ENCODE measurements at regions of chr19 and their contacts with region 1.

Region 1: DNA sequence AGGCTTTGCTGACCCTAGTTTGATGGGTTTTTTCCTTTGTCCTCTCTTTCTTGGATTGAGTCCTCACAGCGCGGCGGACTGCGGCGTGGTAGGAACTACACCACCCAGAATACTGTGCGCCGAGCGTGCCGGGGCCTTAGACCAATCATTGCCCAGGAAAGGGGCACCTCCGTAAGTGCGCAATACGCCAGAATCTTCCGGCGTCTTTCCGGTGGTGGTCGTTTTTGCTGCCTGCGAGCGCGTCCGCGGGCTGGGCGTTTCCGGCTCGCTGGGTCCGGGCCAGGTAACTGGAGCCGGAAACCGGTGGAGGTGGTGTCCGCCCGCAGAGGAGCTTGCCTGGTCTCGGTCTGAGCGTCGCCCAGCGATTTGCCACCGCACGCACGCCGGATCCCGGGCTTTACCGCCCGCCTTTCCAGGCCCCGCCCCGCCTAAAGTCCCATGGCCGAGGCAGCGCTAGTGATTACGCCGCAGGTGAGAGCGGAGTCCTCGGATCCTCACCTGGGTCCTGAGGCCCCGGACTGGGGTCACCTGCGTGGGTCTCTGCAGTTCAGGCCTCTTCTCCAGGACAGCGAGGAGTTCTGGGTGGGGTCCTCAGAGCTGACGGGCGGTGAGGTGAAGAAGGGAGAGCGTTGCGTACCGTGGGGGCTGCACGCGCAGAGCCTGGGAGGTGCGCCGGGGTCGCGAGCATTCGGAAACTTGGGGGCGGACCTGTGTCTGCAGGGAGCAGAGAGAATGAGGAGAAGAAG is at the start of gene ZNF549:
- DNase-seq: peak; percentile 88 to 93 (median 90)
- H3K4me3 ChIP-seq: peak within 1 kb of the TSS; percentile 15 to 99
- H3K4me3 Mint-ChIP-seq: peak within 1 kb of the TSS; percentile 86 to 98 (median 92)
- H3K27ac ChIP-seq: peak within 1 kb of the TSS; percentile 79
- H3K27ac Mint-ChIP-seq: peak within 1 kb of the TSS; percentile 86 to 97 (median 92)
- H3K4me1 ChIP-seq: peaks cover 16% of the 10 kb centered on the region
- H3K4me1 Mint-ChIP-seq: peaks cover 16 to 31% (median 22%) of the 10 kb centered on the region in 4 donors
- H3K27me3 ChIP-seq: no peaks in the 10 kb centered on the region
- H3K27me3 Mint-ChIP-seq: peaks cover 0 to 4% of the 10 kb centered on the region in 2 donors
- total RNA-seq, gene ZNF549: 20.5 to 21.8 TPM

Region 2: GRCh38 chr19:57320180-57321084 is 206.9 kb before region 1 on chr19 and contains the start of gene ZNF543:
- CTCF ChIA-PET with region 1: no interaction called
- POLR2A ChIA-PET with region 1: no interaction called
- intact Hi-C with region 1: loop called (anchors 1 kb)
- DNase-seq: peak; percentile 86 to 91 (median 89)
- H3K4me3 ChIP-seq: peak within 1 kb of the TSS; percentile 81 to 90
- H3K4me3 Mint-ChIP-seq: peak within 1 kb of the TSS; percentile 90 to 97 (median 94)
- H3K27ac ChIP-seq: peak within 1 kb of the TSS; percentile 84
- H3K27ac Mint-ChIP-seq: peak within 1 kb of the TSS; percentile 90 to 99 (median 97)
- H3K4me1 ChIP-seq: peaks cover 29% of the 10 kb centered on the region
- H3K4me1 Mint-ChIP-seq: peaks cover 18 to 34% (median 27%) of the 10 kb centered on the region in 4 donors
- H3K27me3 ChIP-seq: peaks cover 8% of the 10 kb centered on the region
- H3K27me3 Mint-ChIP-seq: peaks cover 14 to 19% of the 10 kb centered on the region in 2 donors
- total RNA-seq, gene ZNF543: 9.4 to 10.7 TPM

Region 3: DNA sequence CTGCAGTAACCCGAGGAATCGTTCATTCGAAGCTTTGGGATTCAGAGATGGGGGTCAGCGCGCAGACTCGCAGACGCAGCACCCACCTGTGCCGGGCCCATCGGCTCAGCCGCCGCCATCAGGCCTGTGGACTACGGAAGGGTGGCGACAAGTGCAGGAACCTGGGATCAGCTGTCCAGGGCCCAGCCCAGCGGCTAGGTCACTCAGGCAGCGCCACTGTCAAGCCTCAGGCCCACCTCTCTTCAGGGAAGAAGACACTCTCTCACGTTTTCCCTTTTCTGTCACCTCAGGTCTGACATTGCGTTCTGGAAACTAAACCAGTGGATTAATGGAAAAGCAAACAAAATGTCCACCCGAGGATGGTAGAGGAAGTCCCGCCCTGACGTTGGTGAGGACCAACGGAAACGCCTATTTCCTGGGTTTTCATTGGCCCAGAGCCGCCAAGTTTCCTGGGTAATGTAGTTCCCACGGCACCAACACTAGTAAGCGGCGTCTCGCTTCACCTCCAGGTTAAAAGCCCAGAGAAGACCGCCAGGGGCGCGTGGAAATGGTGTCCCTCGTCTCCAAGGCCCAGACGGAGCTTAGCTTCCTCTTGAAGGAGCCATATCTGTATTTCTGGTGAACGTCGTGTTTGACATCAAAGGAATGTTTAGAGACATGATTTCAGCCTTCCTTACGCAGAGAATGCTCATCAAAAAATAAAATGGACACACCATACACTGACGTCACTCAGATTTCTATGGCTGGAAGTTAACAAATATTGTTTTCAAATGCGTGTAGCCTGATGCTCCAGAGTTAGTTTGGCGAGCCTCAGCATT is 49.9 kb before region 1 on chr19 and contains the start of gene ZNF772:
- CTCF ChIA-PET with region 1: no interaction called
- POLR2A ChIA-PET with region 1: interaction called, 4 read pairs
- intact Hi-C with region 1: loop called (anchors 1 kb)
- DNase-seq: peak; percentile 86 to 96 (median 89)
- H3K4me3 ChIP-seq: peak within 1 kb of the TSS; percentile 36 to 89
- H3K4me3 Mint-ChIP-seq: peak within 1 kb of the TSS; percentile 86 to 98 (median 92)
- H3K27ac ChIP-seq: peak within 1 kb of the TSS; percentile 61
- H3K27ac Mint-ChIP-seq: peak within 1 kb of the TSS; percentile 26 to 95 (median 90)
- H3K4me1 ChIP-seq: peaks cover 8% of the 10 kb centered on the region
- H3K4me1 Mint-ChIP-seq: peaks cover 4 to 19% (median 14%) of the 10 kb centered on the region in 4 donors
- H3K27me3 ChIP-seq: no peaks in the 10 kb centered on the region
- H3K27me3 Mint-ChIP-seq: peaks cover 0 to 2% of the 10 kb centered on the region in 2 donors
- total RNA-seq, gene ZNF772: 12.8 to 17.4 TPM

Region 4: DNA sequence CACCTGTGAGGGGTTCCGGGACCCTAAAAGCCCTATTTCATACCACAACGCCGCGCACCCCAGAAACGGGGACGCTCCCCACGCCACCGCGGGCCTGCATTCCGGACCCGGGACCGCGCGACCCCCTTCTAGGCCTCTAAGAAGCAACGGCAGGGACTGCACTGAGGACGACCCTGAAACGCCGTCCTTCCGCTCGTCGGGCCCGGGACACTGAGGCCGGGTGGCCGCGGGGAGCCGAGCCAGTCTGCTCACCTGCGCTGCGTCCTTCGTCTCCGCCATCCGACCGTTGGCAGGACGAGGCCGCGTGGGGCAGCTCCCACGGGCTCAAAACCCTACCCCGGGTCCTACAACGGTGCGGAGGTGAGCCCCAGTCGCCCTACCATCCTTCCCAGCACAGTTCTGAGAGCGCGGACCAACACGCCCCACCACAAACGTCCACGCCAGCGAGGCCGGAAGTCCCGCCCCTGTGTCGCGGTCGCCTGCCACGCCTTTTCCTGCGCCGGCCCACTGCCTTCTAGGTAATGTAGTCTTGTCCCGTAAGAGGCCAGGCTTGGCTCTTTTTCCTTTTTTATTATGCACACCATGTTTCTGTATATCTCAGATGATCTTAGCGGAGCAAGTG is 32.2 kb after region 1 on chr19 and contains the start of gene ZNF550:
- CTCF ChIA-PET with region 1: no interaction called
- POLR2A ChIA-PET with region 1: interaction called, 5 read pairs
- intact Hi-C with region 1: loop called (anchors 1 kb)
- DNase-seq: peak; percentile 83 to 86 (median 84)
- H3K4me3 ChIP-seq: peak within 1 kb of the TSS; percentile 44 to 84
- H3K4me3 Mint-ChIP-seq: peak within 1 kb of the TSS; percentile 91 to 99 (median 98)
- H3K27ac ChIP-seq: peak within 1 kb of the TSS; percentile 63
- H3K27ac Mint-ChIP-seq: peak within 1 kb of the TSS; percentile 70 to 97 (median 95)
- H3K4me1 ChIP-seq: peaks cover 22% of the 10 kb centered on the region
- H3K4me1 Mint-ChIP-seq: peaks cover 20 to 47% (median 29%) of the 10 kb centered on the region in 4 donors
- H3K27me3 ChIP-seq: no peaks in the 10 kb centered on the region
- H3K27me3 Mint-ChIP-seq: peaks cover 0 to 1% of the 10 kb centered on the region in 2 donors
- total RNA-seq, gene ZNF550: 37.0 to 37.8 TPM